GM18951 (cell line): ENCODE measurements at regions of chr19 and their contacts with region 1.

Region 1: DNA sequence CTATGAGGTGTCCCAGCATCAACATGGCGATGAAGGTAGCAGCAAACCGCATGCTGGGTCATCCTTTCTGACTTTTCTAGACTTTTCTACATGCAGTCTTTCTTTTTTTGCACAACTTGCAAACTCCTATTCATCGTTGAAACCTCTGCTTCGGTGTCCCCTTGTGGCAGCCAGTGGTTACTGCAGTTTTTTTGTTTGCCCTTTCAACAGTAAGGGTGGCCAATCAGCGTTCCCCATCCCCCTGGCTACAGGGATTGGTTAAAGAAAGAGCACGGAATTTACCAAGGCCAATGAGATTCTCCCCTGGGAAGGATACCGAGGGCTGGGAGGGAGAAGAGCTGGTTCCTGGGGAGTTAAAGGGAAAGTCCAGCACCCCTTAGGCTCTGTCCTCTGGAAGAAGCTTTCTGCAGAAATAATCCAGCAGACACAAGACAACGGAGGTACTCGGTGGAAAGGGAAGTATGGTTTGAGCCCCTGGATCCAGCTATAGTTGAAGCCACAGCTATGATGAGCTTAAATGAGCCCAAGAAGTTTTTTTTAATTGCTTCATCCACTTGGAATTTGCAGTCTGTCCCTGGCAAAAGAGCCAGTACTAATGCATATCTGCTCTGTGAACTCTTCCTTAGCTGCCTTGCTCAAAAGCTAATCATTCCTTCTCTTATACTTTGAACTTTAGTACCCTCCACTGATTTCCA is 5.6 kb upstream of the LSM4 start:
- POLR2A ChIP-seq: peak; percentile 46

Region 2: DNA sequence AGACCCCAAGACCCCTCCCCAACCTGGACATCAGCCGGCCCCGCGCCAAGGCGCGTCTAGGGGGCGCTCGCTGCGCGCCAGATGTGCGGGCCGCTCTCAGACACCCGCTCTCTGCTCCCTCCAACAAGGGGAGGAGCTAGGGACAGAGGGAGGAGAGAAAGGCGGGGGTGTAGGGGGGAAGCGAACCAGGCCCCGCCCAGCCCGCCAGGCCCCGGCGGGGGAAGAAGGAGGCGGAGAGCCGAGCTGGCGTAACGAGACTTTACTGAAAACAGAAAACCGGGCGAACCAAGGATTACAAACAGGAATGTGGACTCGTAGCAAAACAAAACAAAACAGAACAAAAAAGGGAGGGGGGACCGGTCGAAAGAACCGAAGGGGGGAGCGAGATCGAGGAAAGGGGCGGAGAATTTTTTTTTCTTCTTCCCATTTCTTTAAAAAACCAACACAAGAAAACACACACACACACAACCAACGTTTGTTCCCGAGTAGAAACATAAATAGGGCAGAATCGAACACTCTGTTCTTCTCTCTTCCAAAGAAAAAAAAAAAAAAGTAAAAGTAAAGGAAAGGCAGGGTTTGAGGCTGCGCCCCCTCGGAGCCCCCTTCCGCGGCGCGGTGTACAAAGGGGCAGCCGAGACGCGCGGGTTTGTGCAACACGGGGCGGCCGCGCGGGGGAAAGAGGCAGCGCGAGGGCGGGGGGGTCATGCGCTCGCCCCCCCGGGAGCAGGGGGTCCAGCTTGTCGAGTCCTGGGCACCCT is 48.8 kb before region 1 on chr19:
- in situ Hi-C with region 1: loop called (anchors 5 kb)
- POLR2A ChIP-seq: peak; percentile 60

Region 3: DNA sequence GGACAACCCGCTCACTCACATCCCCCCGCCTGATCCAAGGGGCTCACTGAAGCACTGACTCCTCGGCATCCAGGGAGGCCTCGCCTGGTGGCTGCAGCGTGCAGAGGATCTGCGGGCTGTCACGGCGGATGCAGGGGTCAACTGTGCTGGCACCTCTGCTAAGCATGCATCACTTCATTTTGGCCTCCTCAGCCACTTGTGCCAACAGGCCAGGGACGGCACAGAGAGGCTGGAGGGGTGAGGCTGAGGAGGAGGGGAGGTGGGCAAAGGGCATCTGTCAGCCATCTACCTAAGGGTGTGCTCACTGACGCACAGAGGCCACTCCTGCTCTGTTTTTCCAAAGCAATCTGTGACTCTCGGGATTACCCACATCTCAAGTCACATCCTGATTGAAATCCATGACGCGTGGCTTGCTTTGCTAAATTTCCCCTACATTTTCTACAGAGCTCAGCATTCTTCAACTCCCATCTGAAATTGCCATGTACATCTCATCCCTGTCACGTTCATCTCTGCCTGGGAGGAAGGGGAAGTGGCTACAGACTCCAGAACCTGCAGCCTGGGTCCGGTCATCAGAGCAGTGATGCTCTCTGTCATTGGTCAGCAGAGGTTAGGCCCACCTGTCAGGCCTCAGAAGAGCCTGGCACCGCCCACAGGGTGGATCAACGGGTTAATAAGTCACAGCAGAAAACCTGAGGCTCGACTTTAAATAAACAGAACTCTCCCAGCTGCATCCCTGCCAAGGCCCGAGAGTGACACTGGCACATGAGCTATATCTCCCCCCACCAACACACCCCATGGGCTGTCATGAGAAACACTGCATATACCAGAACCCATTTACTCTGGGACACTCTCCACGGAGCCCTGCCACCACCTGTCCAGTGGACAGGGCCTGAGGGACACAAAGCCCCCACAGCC is 175.7 kb after region 1 on chr19:
- in situ Hi-C with region 1: no loop called
- POLR2A ChIP-seq: no peak